ENCODE measurements at regions of chr3 and their contacts with region 1.

Region 1: GRCh38 chr3:160577556-160578195 is 12.3 kb upstream of the KPNA4 start:
- DNase-seq: no peak
- ATAC-seq: peak; percentile 31 to 79

Region 2: GRCh38 chr3:160941885-160942494 is 364.3 kb after region 1 on chr3:
- intact Hi-C with region 1: loop called in 1 of 2 experiments (anchors 10 kb)
- DNase-seq: peak; percentile 43
- ATAC-seq: peak; percentile 56 to 67